ENCODE measurements at regions of chr4 and their contacts with region 1.

Region 1: DNA sequence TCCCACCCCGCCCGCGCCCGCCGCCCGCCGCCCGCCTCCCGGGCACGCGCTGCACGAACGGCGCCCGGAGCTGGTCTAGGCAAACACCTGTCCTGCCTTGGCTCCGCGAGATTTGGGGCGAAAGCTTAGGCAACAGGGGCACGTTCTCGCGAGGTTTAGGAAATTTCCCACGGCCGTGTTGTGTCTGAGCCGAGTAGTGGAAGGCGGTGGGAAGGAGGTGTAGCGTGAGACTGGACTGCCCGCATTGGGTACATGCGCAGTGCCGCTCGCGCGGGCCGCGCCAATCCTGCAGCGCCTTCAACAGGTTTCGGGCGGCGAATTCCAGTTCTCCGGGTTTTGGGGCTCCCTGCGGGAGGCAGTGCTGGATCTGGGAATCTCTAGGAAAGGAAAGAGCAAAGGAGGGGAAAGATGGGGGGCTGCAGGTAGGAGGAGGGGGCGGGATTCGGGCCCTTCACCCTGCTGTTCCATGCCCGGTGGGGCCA is 1.3 kb upstream of the RBPJ start:
- DNase-seq: peak; percentile 99
- H3K4me3 Mint-ChIP-seq: peak overlapping the region; percentile 97
- H3K27ac Mint-ChIP-seq: peak overlapping the region; percentile 99
- H3K4me1 Mint-ChIP-seq: peaks cover 41% of the 10 kb centered on the region
- H3K27me3 Mint-ChIP-seq: peaks cover 3% of the 10 kb centered on the region

Region 2: GRCh38 chr4:25986807-25987206 is 332.7 kb before region 1 on chr4:
- intact Hi-C with region 1: loop called (anchors 5 kb)
- DNase-seq: no peak
- H3K4me3 Mint-ChIP-seq: no peak overlapping the region
- H3K27ac Mint-ChIP-seq: no peak overlapping the region
- H3K4me1 Mint-ChIP-seq: peaks cover 4% of the 10 kb centered on the region
- H3K27me3 Mint-ChIP-seq: peaks cover 2% of the 10 kb centered on the region

Region 3: DNA sequence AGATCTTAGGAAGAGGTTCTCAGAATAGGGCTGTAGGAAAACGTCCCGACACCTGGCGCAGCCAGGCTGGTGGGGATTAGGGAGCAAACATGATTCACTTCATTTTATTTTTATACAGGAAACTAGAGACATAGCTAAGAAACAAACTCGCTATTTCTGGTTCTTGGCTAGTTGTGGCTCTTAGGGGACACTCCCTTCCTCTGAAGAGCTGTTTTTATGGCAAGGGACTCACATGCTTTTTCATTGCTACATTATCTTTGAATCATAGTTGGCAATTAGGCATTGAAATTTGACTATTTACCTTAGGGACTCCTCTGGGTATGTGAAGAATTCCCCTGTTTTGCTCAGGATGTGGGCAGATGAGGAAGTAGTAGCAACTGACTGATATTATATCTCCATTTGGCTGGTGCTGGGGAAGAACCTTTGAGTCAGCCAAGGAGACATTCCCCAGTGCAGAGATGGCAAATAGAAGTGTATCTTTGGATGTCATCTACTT is 231.0 kb before region 1 on chr4:
- intact Hi-C with region 1: loop called (anchors 1 kb)
- DNase-seq: peak; percentile 77
- H3K4me3 Mint-ChIP-seq: peak overlapping the region; percentile 80
- H3K27ac Mint-ChIP-seq: peak overlapping the region; percentile 99
- H3K4me1 Mint-ChIP-seq: peaks cover 68% of the 10 kb centered on the region
- H3K27me3 Mint-ChIP-seq: no peaks in the 10 kb centered on the region

Region 4: GRCh38 chr4:26288355-26288909 is 31.1 kb before region 1 on chr4:
- intact Hi-C with region 1: loop called (anchors 1 kb)
- DNase-seq: peak; percentile 69
- H3K4me3 Mint-ChIP-seq: peak overlapping the region; percentile 38
- H3K27ac Mint-ChIP-seq: peak overlapping the region; percentile 70
- H3K4me1 Mint-ChIP-seq: peaks cover 16% of the 10 kb centered on the region
- H3K27me3 Mint-ChIP-seq: no peaks in the 10 kb centered on the region

Measured in activated CD4-positive, alpha-beta T cell treated with anti-CD3 and anti-CD28 coated beads, Interleukin-2, amount 10 ng/mL, durations not matched to agents 24 days and 14 days (primary cell).